Activated T-helper 1 cell treated with anti-CD3 and anti-CD28 coated beads, Interleukin-12 subunit alpha, Interleukin-12 subunit beta, Interleukin-2, Interleukin-4 antibody, amounts not matched to agents 30 ng/mL and 10 ng/mL and 1 ng/mL, durations not matched to agents 14 hours and 24 hours and 36 hours (primary cell): ENCODE measurements at regions of chr19 and their contacts with region 1.

Region 1: GRCh38 chr19:47256688-47257443 is 541 bp downstream of the CCDC9 start:
- DNase-seq: peak; percentile 99
- H3K4me3 Mint-ChIP-seq: peak overlapping the region; percentile 86
- H3K27ac Mint-ChIP-seq: peak overlapping the region; percentile 95
- H3K4me1 Mint-ChIP-seq: peaks cover 31% of the 10 kb centered on the region
- H3K27me3 Mint-ChIP-seq: peaks cover 2% of the 10 kb centered on the region

Region 2: GRCh38 chr19:46346821-46347571 is 909.9 kb before region 1 on chr19 and contains the start of gene PPP5C:
- intact Hi-C with region 1: no loop called
- DNase-seq: peak; percentile 86
- H3K4me3 Mint-ChIP-seq: peak within 1 kb of the TSS; percentile 94
- H3K27ac Mint-ChIP-seq: peak within 1 kb of the TSS; percentile 93
- H3K4me1 Mint-ChIP-seq: peaks cover 48% of the 10 kb centered on the region
- H3K27me3 Mint-ChIP-seq: peaks cover 17% of the 10 kb centered on the region
- total RNA-seq, gene PPP5C: 160 and 173 TPM in 2 replicates

Region 3: GRCh38 chr19:46634045-46634655 is 622.7 kb before region 1 on chr19:
- intact Hi-C with region 1: loop called (anchors 1 kb)
- DNase-seq: peak; percentile 94
- H3K4me3 Mint-ChIP-seq: peak overlapping the region; percentile 85
- H3K27ac Mint-ChIP-seq: peak overlapping the region; percentile 75
- H3K4me1 Mint-ChIP-seq: peaks cover 11% of the 10 kb centered on the region
- H3K27me3 Mint-ChIP-seq: peaks cover 2% of the 10 kb centered on the region

Region 4: GRCh38 chr19:47112997-47113849 is 143.6 kb before region 1 on chr19 and contains the start of gene ZC3H4:
- intact Hi-C with region 1: loop called (anchors 1 kb)
- DNase-seq: peak; percentile 100
- H3K4me3 Mint-ChIP-seq: peak within 1 kb of the TSS; percentile 92
- H3K27ac Mint-ChIP-seq: peak within 1 kb of the TSS; percentile 99
- H3K4me1 Mint-ChIP-seq: peaks cover 33% of the 10 kb centered on the region
- H3K27me3 Mint-ChIP-seq: no peaks in the 10 kb centered on the region
- total RNA-seq, gene ZC3H4: 111 and 114 TPM in 2 replicates

Region 5: GRCh38 chr19:47225746-47226425 is 31.0 kb before region 1 on chr19:
- intact Hi-C with region 1: loop called (anchors 1 kb)
- DNase-seq: peak; percentile 87
- H3K4me3 Mint-ChIP-seq: peak overlapping the region; percentile 38
- H3K27ac Mint-ChIP-seq: peak overlapping the region; percentile 82
- H3K4me1 Mint-ChIP-seq: peaks cover 6% of the 10 kb centered on the region
- H3K27me3 Mint-ChIP-seq: no peaks in the 10 kb centered on the region

Region 6: GRCh38 chr19:47231215-47231984 is 25.5 kb before region 1 on chr19:
- intact Hi-C with region 1: loop called (anchors 1 kb)
- DNase-seq: peak; percentile 93
- H3K4me3 Mint-ChIP-seq: peak overlapping the region; percentile 63
- H3K27ac Mint-ChIP-seq: peak overlapping the region; percentile 74
- H3K4me1 Mint-ChIP-seq: peaks cover 19% of the 10 kb centered on the region
- H3K27me3 Mint-ChIP-seq: peaks cover 4% of the 10 kb centered on the region